Activated naive CD4-positive, alpha-beta T cell treated with anti-CD3 and anti-CD28 coated beads for 36 hours (primary cell): ENCODE measurements at regions of chr1 and their contacts with region 1.

Region 1: DNA sequence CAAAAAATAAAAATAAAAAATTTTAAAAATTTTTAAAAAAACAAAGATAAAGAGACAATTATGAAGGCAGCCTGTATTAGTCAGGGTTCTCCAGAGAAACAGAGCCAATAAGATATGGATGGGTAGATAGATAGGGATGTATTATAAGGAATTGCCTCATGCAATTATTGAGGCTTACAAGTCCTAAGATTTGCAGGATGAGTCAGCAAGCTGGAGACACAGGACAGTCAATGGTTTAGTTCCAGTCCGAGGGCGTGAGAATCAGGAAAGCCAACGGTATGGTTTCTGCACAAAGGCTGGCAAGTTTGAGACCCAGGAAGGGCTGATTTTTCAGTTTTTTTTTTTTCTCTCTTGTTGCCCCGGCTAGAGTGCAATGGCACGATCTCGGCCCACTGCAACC is 24.1 kb upstream of the EIF4G3 start:
- DNase-seq: no peak
- H3K4me3 Mint-ChIP-seq: no peak overlapping the region
- H3K27ac Mint-ChIP-seq: no peak overlapping the region
- H3K4me1 Mint-ChIP-seq: no peaks in the 10 kb centered on the region
- H3K27me3 Mint-ChIP-seq: peaks cover 4% of the 10 kb centered on the region

Region 2: DNA sequence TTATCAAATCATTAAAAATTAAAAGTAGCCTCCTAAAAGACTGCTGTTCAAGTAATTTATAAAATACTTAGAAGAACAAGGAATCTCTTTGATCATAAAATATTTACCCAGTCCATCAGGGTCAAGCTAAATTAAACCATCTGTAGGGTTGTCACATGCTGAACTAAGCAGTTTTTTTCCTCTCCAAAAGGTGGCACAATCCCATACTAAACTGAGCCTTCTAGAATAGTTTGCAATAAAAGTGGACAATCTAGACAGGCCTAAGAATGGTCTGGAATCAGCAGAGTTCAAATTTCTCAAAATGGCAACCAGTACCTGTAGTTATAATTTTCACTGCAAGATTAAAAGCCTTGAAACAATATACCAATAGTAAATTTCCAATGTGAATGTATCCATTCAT is 218.9 kb before region 1 on chr1:
- CTCF ChIA-PET with region 1: interaction called, 4 read pairs
- intact Hi-C with region 1: loop called (anchors 1 kb)
- DNase-seq: no peak
- H3K4me3 Mint-ChIP-seq: no peak overlapping the region
- H3K27ac Mint-ChIP-seq: no peak overlapping the region
- H3K4me1 Mint-ChIP-seq: no peaks in the 10 kb centered on the region
- H3K27me3 Mint-ChIP-seq: no peaks in the 10 kb centered on the region

Region 3: GRCh38 chr1:21225065-21225464 is 24.3 kb after region 1 on chr1:
- CTCF ChIA-PET with region 1: no interaction called
- intact Hi-C with region 1: no loop called
- DNase-seq: no peak
- H3K4me3 Mint-ChIP-seq: no peak overlapping the region
- H3K27ac Mint-ChIP-seq: no peak overlapping the region
- H3K4me1 Mint-ChIP-seq: no peaks in the 10 kb centered on the region
- H3K27me3 Mint-ChIP-seq: no peaks in the 10 kb centered on the region